Transverse colon (tissue), 4 donors: ENCODE measurements at regions of chr13 and their contacts with region 1.

Region 1: DNA sequence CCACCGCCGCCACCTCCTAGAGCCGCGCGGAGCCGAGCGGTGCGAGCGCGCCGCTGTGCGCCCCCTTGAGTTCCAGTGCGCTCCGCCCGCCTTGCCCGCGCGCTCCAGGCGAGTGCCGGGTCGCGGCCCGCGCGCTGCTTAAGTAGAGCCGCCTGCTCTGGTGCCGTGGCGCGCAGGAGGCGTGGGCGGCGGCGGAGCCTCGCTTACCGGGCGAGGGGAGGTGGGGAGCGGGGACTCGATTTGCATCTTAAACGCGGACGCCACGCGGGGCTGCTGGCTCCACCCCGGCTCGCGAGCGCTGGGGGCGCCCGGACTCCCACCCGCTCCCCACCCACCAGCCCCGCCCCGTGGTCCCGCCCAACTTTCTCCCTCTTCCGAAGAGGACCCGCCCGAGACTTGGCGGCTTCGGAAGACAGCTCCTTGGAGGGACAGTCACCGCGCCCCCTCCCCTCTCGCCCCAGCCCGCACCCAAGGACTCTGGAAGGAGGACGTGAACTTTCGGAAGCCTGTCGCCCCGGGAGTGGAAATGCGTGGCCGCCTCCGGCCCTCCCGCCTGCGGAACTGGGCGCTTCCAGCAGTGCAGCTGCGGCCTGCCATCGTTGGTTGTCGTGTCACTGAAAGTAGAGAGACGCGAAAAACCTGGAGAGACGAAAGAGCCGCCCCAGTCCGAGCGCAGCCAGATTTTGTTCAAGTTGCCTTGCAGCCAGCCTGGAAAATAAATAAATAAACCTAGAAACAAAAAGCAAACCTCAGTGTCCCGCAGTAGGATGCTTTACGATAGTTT is at the start of gene KCTD12:
- DNase-seq: peak; percentile 81
- H3K4me3 ChIP-seq: peak within 1 kb of the TSS; percentile 39 to 80 (median 60)
- H3K27ac ChIP-seq: peak within 1 kb of the TSS; percentile 87 to 93 (median 88)
- H3K4me1 ChIP-seq: peaks cover 0 to 35% (median 14%) of the 10 kb centered on the region in 4 donors
- H3K27me3 ChIP-seq: peaks cover 6% of the 10 kb centered on the region
- CTCF ChIP-seq: peak in 3 of 5 experiments; percentile 8 to 21 (median 18)
- EP300 ChIP-seq: no peak
- POLR2A ChIP-seq: peak; percentile 67
- total RNA-seq, gene KCTD12: 24.2 to 34.8 (median 27.6) TPM

Region 2: DNA sequence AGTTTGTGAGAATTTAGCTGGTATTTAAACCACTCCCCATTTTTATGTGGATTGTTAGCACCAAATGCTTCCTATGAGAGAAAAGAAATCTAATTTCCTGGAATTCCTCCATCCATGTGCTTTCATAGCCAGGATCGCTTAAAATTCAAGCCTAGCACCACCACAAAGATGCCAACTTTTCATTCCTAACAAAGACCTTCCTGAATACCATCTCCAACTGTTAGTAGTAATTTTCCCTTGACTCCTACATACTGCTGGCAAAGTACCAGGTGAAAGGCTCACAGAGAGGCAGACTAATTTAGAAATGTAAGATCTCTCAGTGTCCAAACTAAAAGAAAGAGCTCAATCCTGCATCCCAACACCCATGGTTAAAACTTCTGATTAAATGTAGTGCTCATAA is 386.6 kb before region 1 on chr13:
- in situ Hi-C with region 1: loop called in 1 of 4 experiments (anchors 25 kb)
- intact Hi-C with region 1: no loop called
- DNase-seq: no peak
- H3K4me3 ChIP-seq: no peak overlapping the region
- H3K27ac ChIP-seq: no peak overlapping the region
- H3K4me1 ChIP-seq: no peaks in the 10 kb centered on the region
- H3K27me3 ChIP-seq: no peaks in the 10 kb centered on the region
- CTCF ChIP-seq: no peak
- EP300 ChIP-seq: no peak
- POLR2A ChIP-seq: no peak

Region 3: GRCh38 chr13:76667551-76667950 is 218.9 kb before region 1 on chr13:
- in situ Hi-C with region 1: loop called in 1 of 4 experiments (anchors 25 kb)
- intact Hi-C with region 1: loop called (anchors 10 kb)
- DNase-seq: no peak
- H3K4me3 ChIP-seq: no peak overlapping the region
- H3K27ac ChIP-seq: no peak overlapping the region
- H3K4me1 ChIP-seq: peaks cover 0 to 4% (median 0%) of the 10 kb centered on the region in 4 donors
- H3K27me3 ChIP-seq: no peaks in the 10 kb centered on the region
- CTCF ChIP-seq: peak in 4 of 5 experiments; percentile 13 to 40 (median 28)
- EP300 ChIP-seq: no peak
- POLR2A ChIP-seq: no peak

Region 4: DNA sequence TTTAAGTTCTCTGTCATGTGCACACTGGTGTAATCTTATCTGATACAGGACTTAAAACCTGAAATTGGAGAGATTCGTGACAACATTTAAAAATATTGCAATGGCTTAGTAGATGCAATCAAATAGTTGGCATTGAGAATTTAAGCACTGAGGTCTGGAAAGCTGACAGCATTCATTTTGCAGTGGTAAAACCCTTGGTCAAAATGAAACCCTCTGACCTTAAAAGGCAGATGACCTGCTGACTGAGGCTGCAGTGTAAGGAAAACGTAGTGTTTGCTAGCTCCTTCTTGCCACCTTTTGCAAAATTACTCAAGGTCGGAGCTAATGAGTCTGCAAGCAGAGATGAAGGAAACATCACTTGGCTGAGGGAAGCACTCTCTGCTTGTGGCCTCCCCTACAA is 150.8 kb before region 1 on chr13:
- in situ Hi-C with region 1: no loop called
- intact Hi-C with region 1: no loop called
- DNase-seq: no peak
- H3K4me3 ChIP-seq: no peak overlapping the region
- H3K27ac ChIP-seq: no peak overlapping the region
- H3K4me1 ChIP-seq: no peaks in the 10 kb centered on the region
- H3K27me3 ChIP-seq: no peaks in the 10 kb centered on the region
- CTCF ChIP-seq: no peak
- EP300 ChIP-seq: no peak
- POLR2A ChIP-seq: no peak